Activated CD4-positive, alpha-beta T cell treated with anti-CD3 and anti-CD28 coated beads, Interleukin-2, amount 10 ng/mL, durations not matched to agents 24 days and 14 days (primary cell): ENCODE measurements at regions of chr6 and their contacts with region 1.

Region 1: DNA sequence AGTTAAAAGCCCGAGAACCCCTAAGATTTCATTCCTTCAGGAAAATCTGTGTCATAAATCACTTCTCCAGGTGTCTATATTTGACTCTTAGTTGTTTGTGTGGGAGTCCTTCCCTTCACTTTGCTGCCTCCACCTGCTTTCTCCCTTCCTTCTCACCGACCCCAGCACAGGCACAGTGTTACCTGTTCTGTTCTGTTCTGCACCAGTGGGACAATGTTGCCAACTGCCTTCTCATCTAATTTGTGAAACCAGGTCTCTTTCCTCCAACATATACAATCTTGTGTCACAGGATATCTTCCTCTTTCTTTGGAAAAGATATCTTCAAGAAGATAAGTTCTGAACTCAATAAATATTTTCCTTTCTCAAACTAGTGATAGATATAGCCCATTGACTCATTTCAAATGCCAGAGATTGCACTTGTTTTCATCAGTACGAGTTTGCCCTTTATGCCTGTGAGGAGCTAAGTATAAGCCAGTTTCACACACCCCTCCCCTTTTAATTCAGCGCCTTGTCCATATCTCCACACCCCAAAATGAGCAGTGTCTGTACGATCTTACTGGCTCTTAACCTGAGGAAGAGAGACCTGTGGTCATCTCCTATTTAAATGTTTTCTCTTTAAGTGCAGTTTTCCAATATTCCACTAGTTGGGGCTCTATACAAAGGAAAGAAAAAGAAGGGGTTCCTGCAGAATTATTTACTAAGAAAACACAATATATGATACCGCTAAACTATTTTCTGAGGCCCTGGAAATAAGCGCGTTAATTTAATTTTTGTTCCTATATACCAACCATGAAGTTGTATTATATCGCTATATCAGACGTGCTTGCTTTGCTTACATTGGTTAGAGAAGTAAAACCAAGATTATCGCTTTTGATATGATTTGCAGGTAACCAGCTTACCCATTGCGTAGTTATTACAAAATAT is 81.6 kb upstream of the PREP start:
- DNase-seq: peak; percentile 63
- H3K4me3 Mint-ChIP-seq: no peak overlapping the region
- H3K27ac Mint-ChIP-seq: peak overlapping the region; percentile 26
- H3K4me1 Mint-ChIP-seq: peaks cover 41% of the 10 kb centered on the region
- H3K27me3 Mint-ChIP-seq: peaks cover 6% of the 10 kb centered on the region

Region 2: DNA sequence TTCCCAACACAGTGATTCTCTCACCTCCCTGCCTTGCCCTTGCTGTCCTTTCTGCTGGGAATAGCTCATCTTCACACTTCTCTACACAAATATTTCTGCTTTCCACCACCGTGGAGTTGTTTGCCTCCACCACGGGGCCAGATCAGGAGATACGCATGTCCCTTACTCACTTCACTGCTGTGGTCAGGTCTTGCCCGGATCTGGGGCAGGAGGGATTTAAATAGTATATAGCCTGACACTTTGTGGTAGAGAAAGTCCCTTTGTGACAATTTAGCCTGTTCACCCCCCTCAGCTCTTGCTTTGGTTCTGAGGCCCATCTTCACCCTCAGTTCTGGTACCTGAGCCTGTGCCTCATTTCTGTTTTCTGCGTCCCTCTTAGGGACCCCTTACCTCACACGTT is 11.0 kb after region 1 on chr6:
- intact Hi-C with region 1: no loop called
- DNase-seq: no peak
- H3K4me3 Mint-ChIP-seq: no peak overlapping the region
- H3K27ac Mint-ChIP-seq: no peak overlapping the region
- H3K4me1 Mint-ChIP-seq: peaks cover 15% of the 10 kb centered on the region
- H3K27me3 Mint-ChIP-seq: peaks cover 9% of the 10 kb centered on the region

Region 3: GRCh38 chr6:105872246-105872645 is 387.7 kb after region 1 on chr6:
- intact Hi-C with region 1: loop called (anchors 10 kb)
- DNase-seq: no peak
- H3K4me3 Mint-ChIP-seq: no peak overlapping the region
- H3K27ac Mint-ChIP-seq: no peak overlapping the region
- H3K4me1 Mint-ChIP-seq: peaks cover 12% of the 10 kb centered on the region
- H3K27me3 Mint-ChIP-seq: peaks cover 6% of the 10 kb centered on the region

Region 4: DNA sequence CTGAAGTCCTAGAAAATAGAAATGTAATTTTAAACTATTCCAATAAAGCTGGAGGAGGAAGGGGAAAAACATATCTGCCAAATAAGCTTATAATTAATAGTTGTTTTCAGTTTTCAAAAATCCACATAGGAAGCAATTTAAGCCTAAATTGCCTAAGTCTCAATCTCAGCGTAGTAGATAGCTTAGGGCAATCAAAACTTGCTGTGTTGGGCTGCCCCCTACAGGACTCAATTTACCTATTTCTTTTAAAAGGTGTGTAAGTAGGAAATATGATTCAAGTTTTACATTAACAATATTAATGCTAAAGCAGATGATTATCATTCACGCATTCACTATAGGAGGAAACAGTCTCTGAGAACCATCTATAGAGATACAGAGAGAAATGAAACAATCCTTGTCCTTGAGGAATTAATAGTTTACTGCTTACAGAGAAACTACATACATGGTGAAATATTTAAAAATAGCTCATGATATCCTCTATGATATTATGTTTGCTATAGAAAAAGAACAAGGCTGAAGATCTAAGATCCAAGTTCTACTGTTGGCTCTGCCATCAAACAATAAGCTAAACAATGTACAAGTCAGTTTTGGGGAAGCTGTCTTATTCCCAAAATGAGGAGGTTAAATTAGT is 738.9 kb after region 1 on chr6:
- intact Hi-C with region 1: loop called (anchors 1 kb)
- DNase-seq: peak; percentile 91
- H3K4me3 Mint-ChIP-seq: no peak overlapping the region
- H3K27ac Mint-ChIP-seq: no peak overlapping the region
- H3K4me1 Mint-ChIP-seq: peaks cover 32% of the 10 kb centered on the region
- H3K27me3 Mint-ChIP-seq: no peaks in the 10 kb centered on the region

Region 5: GRCh38 chr6:106300944-106301343 is 816.4 kb after region 1 on chr6:
- intact Hi-C with region 1: loop called (anchors 1 kb)
- DNase-seq: no peak
- H3K4me3 Mint-ChIP-seq: no peak overlapping the region
- H3K27ac Mint-ChIP-seq: no peak overlapping the region
- H3K4me1 Mint-ChIP-seq: peaks cover 10% of the 10 kb centered on the region
- H3K27me3 Mint-ChIP-seq: no peaks in the 10 kb centered on the region